Naive thymus-derived CD4-positive, alpha-beta T cell (primary cell): ENCODE measurements at regions of chr15 and their contacts with region 1.

Region 1: GRCh38 chr15:81155375-81156218 is 21.5 kb downstream of the CFAP161 start:
- DNase-seq: peak in 6 of 9 donors; percentile 12 to 44 (median 32)
- ATAC-seq: no peak
- H3K4me3 ChIP-seq: no peak overlapping the region
- H3K4me3 Mint-ChIP-seq: no peak overlapping the region
- H3K27ac ChIP-seq: no peak overlapping the region
- H3K27ac Mint-ChIP-seq: peak overlapping the region in 1 of 9 donors; percentile 2
- H3K4me1 ChIP-seq: no peaks in the 10 kb centered on the region
- H3K4me1 Mint-ChIP-seq: peaks cover under 1 to 19% (median 5%) of the 10 kb centered on the region in 7 donors
- H3K27me3 ChIP-seq: no peaks in the 10 kb centered on the region
- H3K27me3 Mint-ChIP-seq: peaks cover 0 to 13% (median under 1%) of the 10 kb centered on the region in 5 donors

Region 2: DNA sequence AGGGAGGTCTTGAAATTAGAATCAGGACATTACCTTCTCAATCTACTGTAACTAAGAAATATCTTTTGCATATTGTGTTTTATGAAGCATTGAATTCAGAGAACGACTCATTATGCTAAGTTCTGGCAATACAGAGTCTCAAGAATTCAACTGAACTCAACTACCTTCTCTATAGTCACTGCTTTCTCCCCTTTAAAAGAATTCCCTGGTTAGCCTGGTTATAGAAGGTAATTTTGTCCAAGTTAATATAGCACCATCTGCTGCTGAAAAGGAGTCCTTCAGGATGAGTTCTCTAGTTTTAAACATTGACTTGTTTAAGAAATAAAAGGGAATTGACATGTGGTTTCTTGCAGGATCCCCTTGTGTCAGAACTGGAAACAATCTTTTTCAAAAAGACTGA is 101.3 kb after region 1 on chr15:
- CTCF ChIA-PET with region 1: interaction called, 6 read pairs
- POLR2A ChIA-PET with region 1: no interaction called
- intact Hi-C with region 1: loop called in 1 of 2 experiments (anchors 2 kb)
- DNase-seq: no peak
- ATAC-seq: no peak
- H3K4me3 ChIP-seq: no peak overlapping the region
- H3K4me3 Mint-ChIP-seq: no peak overlapping the region
- H3K27ac ChIP-seq: no peak overlapping the region
- H3K27ac Mint-ChIP-seq: no peak overlapping the region
- H3K4me1 ChIP-seq: no peaks in the 10 kb centered on the region
- H3K4me1 Mint-ChIP-seq: peaks cover 0 to 4% (median 0%) of the 10 kb centered on the region in 7 donors
- H3K27me3 ChIP-seq: no peaks in the 10 kb centered on the region
- H3K27me3 Mint-ChIP-seq: peaks cover 0 to 26% (median 14%) of the 10 kb centered on the region in 5 donors

Region 3: GRCh38 chr15:81336568-81336967 is 181.0 kb after region 1 on chr15:
- CTCF ChIA-PET with region 1: no interaction called
- POLR2A ChIA-PET with region 1: no interaction called
- intact Hi-C with region 1: loop called in 1 of 2 experiments (anchors 1 kb)
- DNase-seq: peak in 6 of 9 donors; percentile 32 to 49 (median 37)
- ATAC-seq: peak; percentile 70
- H3K4me3 ChIP-seq: no peak overlapping the region
- H3K4me3 Mint-ChIP-seq: no peak overlapping the region
- H3K27ac ChIP-seq: no peak overlapping the region
- H3K27ac Mint-ChIP-seq: peak overlapping the region in 4 of 9 donors; percentile 3 to 68 (median 17)
- H3K4me1 ChIP-seq: peaks cover 0 to 3% of the 10 kb centered on the region in 2 donors
- H3K4me1 Mint-ChIP-seq: peaks cover 4 to 22% (median 12%) of the 10 kb centered on the region in 7 donors
- H3K27me3 ChIP-seq: no peaks in the 10 kb centered on the region
- H3K27me3 Mint-ChIP-seq: peaks cover 0 to 9% (median 0%) of the 10 kb centered on the region in 5 donors

Region 4: GRCh38 chr15:81373775-81374395 is 218.3 kb after region 1 on chr15 and contains the start of gene TMC3:
- CTCF ChIA-PET with region 1: no interaction called
- POLR2A ChIA-PET with region 1: no interaction called
- intact Hi-C with region 1: no loop called
- DNase-seq: no peak
- ATAC-seq: no peak
- H3K4me3 ChIP-seq: no peak within 1 kb of the TSS
- H3K4me3 Mint-ChIP-seq: no peak within 1 kb of the TSS
- H3K27ac ChIP-seq: no peak within 1 kb of the TSS
- H3K27ac Mint-ChIP-seq: peak within 1 kb of the TSS in 1 of 9 donors; percentile 36
- H3K4me1 ChIP-seq: no peaks in the 10 kb centered on the region
- H3K4me1 Mint-ChIP-seq: no peaks in the 10 kb centered on the region
- H3K27me3 ChIP-seq: no peaks in the 10 kb centered on the region
- H3K27me3 Mint-ChIP-seq: peaks cover 0 to 7% (median 0%) of the 10 kb centered on the region in 5 donors
- total RNA-seq, gene TMC3: not detected